Gastrocnemius medialis (tissue), 4 donors: ENCODE measurements at regions of chr6 and their contacts with region 1.

Region 1: GRCh38 chr6:99032396-99032795 is 84.7 kb upstream of the FBXL4 start:
- DNase-seq: no peak
- ATAC-seq: peak in 1 of 2 donors; percentile 84
- H3K4me3 ChIP-seq: no peak overlapping the region
- H3K27ac ChIP-seq: peak overlapping the region; percentile 35 to 73 (median 65)
- H3K4me1 ChIP-seq: peaks cover 17 to 26% of the 10 kb centered on the region in 2 donors
- H3K27me3 ChIP-seq: no peaks in the 10 kb centered on the region
- CTCF ChIP-seq: no peak
- POLR2A ChIP-seq: no peak

Region 2: DNA sequence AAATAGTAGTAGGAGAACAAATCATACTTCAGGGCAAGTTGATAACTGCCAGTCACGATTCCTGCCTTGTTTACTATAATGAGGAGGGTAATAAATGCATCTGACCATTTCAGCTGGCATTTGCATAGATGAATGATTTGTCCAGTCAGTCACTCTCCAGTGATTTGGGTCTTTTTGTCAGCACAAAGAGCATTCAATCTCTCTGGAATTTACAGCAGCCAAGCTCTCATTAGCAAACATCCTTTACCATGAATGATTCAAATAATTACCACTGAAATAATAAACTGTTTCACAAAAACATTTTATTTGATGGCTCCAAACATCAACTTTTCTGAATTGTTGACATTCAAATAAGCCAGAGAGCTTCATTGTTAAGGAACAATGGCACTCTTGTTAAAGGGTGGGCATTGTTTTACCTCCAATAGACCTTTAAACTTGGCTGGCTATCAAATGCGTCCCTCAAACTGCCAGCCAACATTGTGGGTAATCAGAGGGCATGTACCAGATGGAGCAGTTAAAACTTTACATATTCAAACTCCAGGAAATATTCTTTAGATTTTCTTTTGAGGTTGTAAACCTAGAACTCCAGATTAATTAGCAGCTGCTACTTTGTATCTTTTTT is 54.6 kb before region 1 on chr6:
- in situ Hi-C with region 1: no loop called
- intact Hi-C with region 1: loop called (anchors 5 kb)
- DNase-seq: no peak
- ATAC-seq: no peak
- H3K4me3 ChIP-seq: no peak overlapping the region
- H3K27ac ChIP-seq: no peak overlapping the region
- H3K4me1 ChIP-seq: peaks cover 30 to 36% of the 10 kb centered on the region in 2 donors
- H3K27me3 ChIP-seq: no peaks in the 10 kb centered on the region
- CTCF ChIP-seq: no peak
- POLR2A ChIP-seq: no peak